ENCODE measurements at regions of chr1 and their contacts with region 1.

Region 1: GRCh38 chr1:167263819-167264464 is 43.3 kb downstream of the POU2F1 start:
- DNase-seq: no peak
- ATAC-seq: peak; percentile 65
- H3K4me3 ChIP-seq: no peak overlapping the region
- H3K27ac ChIP-seq: peak overlapping the region; percentile 42
- H3K4me1 ChIP-seq: peaks cover 10% of the 10 kb centered on the region; the same call in 1 of the 2 replicates
- H3K27me3 ChIP-seq: no peaks in the 10 kb centered on the region
- CTCF ChIP-seq: no peak
- EP300 ChIP-seq: no peak
- POLR2A ChIP-seq: no peak
- RAD21 ChIP-seq: no peak

Region 2: DNA sequence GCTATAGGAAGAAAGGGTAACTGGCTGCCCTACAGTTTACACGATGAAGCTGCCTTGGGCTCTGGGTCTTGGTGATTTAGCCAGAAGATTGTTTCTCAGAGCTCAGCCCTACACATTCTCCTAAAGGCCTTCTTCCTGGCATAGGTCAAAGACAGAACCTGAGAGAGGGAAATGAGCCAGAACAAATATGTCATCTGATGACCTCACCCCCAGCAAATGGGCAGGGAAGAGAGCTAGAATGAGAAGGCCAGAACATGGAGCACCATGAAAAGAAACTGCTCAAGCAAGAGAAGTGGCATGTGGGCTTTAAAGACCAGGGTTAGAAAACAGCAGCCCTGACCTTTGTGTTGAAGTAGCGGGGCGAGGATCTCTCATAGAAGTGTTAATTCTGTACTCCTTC is 283.1 kb before region 1 on chr1:
- CTCF ChIA-PET with region 1: no interaction called
- POLR2A ChIA-PET with region 1: no interaction called
- RAD21 ChIA-PET with region 1: no interaction called
- SMC1A ChIA-PET with region 1: no interaction called
- in situ Hi-C with region 1: no loop called
- intact Hi-C with region 1: no loop called
- DNase-seq: no peak
- ATAC-seq: no peak
- H3K4me3 ChIP-seq: no peak overlapping the region
- H3K27ac ChIP-seq: no peak overlapping the region
- H3K4me1 ChIP-seq: peaks cover 10% of the 10 kb centered on the region
- H3K27me3 ChIP-seq: peaks cover 0 to under 1% of the 10 kb centered on the region in 2 experiments; a peak in 2 of 4 replicates
- CTCF ChIP-seq: no peak
- EP300 ChIP-seq: no peak
- POLR2A ChIP-seq: no peak
- RAD21 ChIP-seq: no peak

Region 3: DNA sequence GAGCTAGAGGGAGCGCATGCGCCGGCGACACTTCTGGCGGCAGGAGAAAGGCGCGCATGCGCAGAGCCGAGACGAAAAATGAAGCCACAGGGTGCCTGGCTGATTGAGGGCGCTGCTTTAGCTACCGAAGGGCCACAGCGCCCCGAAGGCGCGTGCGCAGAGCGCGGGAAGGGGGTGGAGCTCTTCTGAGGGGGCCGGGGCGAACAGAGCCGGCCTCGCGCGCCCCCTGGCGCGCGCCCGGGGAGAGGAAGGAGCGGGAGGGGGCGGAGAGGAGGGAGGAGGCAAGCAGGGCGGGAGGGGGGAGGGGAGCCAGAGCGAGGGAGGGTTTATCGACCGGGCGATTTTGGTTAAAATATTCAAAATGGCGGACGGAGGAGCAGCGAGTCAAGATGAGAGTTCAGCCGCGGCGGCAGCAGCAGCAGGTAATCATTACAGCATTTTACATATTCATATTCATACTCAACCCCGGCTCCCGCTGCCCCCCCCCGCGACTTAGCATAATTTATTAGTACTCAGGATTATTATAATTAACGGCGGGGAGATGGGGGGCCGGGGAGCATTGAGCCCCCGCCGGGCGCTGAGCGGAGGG is 43.3 kb before region 1 on chr1 and contains the start of gene POU2F1:
- CTCF ChIA-PET with region 1: interaction called, 22 read pairs
- POLR2A ChIA-PET with region 1: interaction called, 7 read pairs
- RAD21 ChIA-PET with region 1: interaction called, 124 read pairs
- SMC1A ChIA-PET with region 1: interaction called, 15 read pairs
- in situ Hi-C with region 1: no loop called
- intact Hi-C with region 1: loop called (anchors 5 kb)
- DNase-seq: peak; percentile 94
- ATAC-seq: peak; percentile 81
- H3K4me3 ChIP-seq: peak within 1 kb of the TSS; percentile 92
- H3K27ac ChIP-seq: peak within 1 kb of the TSS; percentile 98
- H3K4me1 ChIP-seq: peaks cover 10% of the 10 kb centered on the region; the same call in 1 of the 2 replicates
- H3K27me3 ChIP-seq: no peaks in the 10 kb centered on the region
- CTCF ChIP-seq: peak; percentile 64 to 81 (median 78)
- EP300 ChIP-seq: no peak
- POLR2A ChIP-seq: no peak; the same call in 1 of the 2 replicates
- RAD21 ChIP-seq: peak; percentile 63
- polyA plus RNA-seq, gene POU2F1: 2.5 to 4.6 TPM

Region 4: DNA sequence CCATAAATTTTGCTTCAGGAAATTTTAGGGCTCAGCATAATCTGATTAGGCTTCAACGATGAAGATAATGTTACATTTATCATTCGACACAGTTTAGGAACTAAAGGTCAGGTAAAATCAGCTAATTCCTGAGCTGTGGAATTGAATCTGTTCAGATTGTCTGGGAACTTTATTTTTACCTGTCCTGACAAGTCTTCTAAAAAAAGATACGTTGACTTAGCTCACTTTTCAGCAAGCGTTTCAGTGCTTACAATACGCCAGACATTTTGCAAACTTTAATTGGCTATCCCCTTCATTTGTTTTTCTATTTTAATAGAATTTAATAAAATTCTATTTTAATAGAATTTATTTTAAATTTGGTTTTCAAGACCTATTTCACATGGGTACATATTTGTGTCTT is 14.6 kb after region 1 on chr1:
- CTCF ChIA-PET with region 1: interaction called, 23 read pairs
- POLR2A ChIA-PET with region 1: interaction called, 4 read pairs
- RAD21 ChIA-PET with region 1: interaction called, 9 read pairs
- SMC1A ChIA-PET with region 1: interaction called, 24 read pairs
- in situ Hi-C with region 1: no loop called
- intact Hi-C with region 1: no loop called
- DNase-seq: no peak
- ATAC-seq: no peak
- H3K4me3 ChIP-seq: no peak overlapping the region
- H3K27ac ChIP-seq: no peak overlapping the region
- H3K4me1 ChIP-seq: peaks cover 14% of the 10 kb centered on the region; the same call in 1 of the 2 replicates
- H3K27me3 ChIP-seq: no peaks in the 10 kb centered on the region
- CTCF ChIP-seq: no peak
- EP300 ChIP-seq: no peak
- POLR2A ChIP-seq: no peak
- RAD21 ChIP-seq: no peak

Region 5: GRCh38 chr1:167367705-167368104 is 103.8 kb after region 1 on chr1:
- CTCF ChIA-PET with region 1: interaction called, 13 read pairs
- POLR2A ChIA-PET with region 1: no interaction called
- RAD21 ChIA-PET with region 1: no interaction called
- SMC1A ChIA-PET with region 1: interaction called, 5 read pairs
- in situ Hi-C with region 1: no loop called
- intact Hi-C with region 1: no loop called
- DNase-seq: no peak
- ATAC-seq: no peak
- H3K4me3 ChIP-seq: no peak overlapping the region
- H3K27ac ChIP-seq: no peak overlapping the region
- H3K4me1 ChIP-seq: no peaks in the 10 kb centered on the region
- H3K27me3 ChIP-seq: no peaks in the 10 kb centered on the region
- CTCF ChIP-seq: no peak
- EP300 ChIP-seq: no peak
- POLR2A ChIP-seq: no peak
- RAD21 ChIP-seq: no peak

Region 6: DNA sequence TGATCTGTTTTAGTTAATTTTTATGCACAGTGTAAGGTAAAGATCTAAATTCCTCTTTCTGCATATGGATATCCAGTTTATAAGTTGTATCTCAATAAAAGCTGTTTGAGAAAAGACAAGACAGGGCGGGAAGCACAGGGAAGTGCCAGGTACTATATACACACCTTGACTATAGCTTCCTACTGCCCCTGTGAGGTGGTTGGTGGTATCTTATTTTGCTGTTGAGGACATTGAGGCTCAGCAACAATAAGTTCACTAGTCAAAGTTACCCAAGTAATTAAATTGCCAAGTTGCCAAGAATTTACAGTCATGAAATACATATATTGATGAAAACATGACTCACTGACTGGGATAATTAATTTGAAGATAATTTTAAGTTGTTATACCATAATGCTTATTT is 145.2 kb after region 1 on chr1:
- CTCF ChIA-PET with region 1: interaction called, 28 read pairs
- POLR2A ChIA-PET with region 1: interaction called, 5 read pairs
- RAD21 ChIA-PET with region 1: interaction called, 15 read pairs
- SMC1A ChIA-PET with region 1: interaction called, 26 read pairs
- in situ Hi-C with region 1: no loop called
- intact Hi-C with region 1: loop called (anchors 5 kb)
- DNase-seq: no peak
- ATAC-seq: peak; percentile 72
- H3K4me3 ChIP-seq: no peak overlapping the region
- H3K27ac ChIP-seq: no peak overlapping the region
- H3K4me1 ChIP-seq: no peaks in the 10 kb centered on the region
- H3K27me3 ChIP-seq: no peaks in the 10 kb centered on the region
- CTCF ChIP-seq: peak in 2 of 3 experiments; percentile 34 to 40; a peak in 4 of 6 replicates
- EP300 ChIP-seq: no peak
- POLR2A ChIP-seq: no peak
- RAD21 ChIP-seq: peak; percentile 44

Region 7: GRCh38 chr1:167533851-167534300 is 269.9 kb after region 1 on chr1:
- CTCF ChIA-PET with region 1: interaction called, 72 read pairs
- POLR2A ChIA-PET with region 1: no interaction called
- RAD21 ChIA-PET with region 1: interaction called, 38 read pairs
- SMC1A ChIA-PET with region 1: interaction called, 31 read pairs
- in situ Hi-C with region 1: loop called (anchors 5 kb)
- intact Hi-C with region 1: loop called (anchors 5 kb)
- DNase-seq: no peak
- ATAC-seq: peak; percentile 90
- H3K4me3 ChIP-seq: no peak overlapping the region
- H3K27ac ChIP-seq: no peak overlapping the region
- H3K4me1 ChIP-seq: peaks cover 4% of the 10 kb centered on the region
- H3K27me3 ChIP-seq: no peaks in the 10 kb centered on the region
- CTCF ChIP-seq: peak; percentile 82 to 87 (median 85)
- EP300 ChIP-seq: no peak
- POLR2A ChIP-seq: no peak
- RAD21 ChIP-seq: peak; percentile 85